OCI-LY7 (cell line): ENCODE measurements at regions of chr9 and their contacts with region 1.

Region 1: GRCh38 chr9:92140074-92140753 is 25.0 kb upstream of the SPTLC1 start:
- DNase-seq: peak; percentile 69
- H3K4me3 ChIP-seq: no peak overlapping the region
- H3K27ac ChIP-seq: no peak overlapping the region
- H3K4me1 ChIP-seq: no peaks in the 10 kb centered on the region
- CTCF ChIP-seq: peak; percentile 89

Region 2: DNA sequence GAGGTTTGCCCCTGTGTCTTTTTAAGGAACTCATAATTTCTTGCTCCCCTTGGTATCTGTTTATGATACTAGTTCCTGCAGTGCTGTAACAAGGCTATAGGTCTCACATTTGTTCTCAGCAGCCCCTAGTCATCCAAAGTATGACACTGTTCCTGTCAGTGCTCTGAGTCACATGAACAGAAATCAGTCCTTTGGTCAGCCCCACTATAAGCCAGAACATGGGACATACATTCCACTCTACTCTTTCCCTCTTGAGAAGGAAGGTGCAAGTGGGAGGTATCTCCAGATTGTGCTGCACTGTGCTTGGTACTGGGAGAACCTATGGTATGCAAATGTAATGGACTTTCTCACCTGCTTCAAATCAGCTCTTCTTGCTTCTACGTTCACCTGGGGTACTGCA is 66.3 kb after region 1 on chr9:
- CTCF ChIA-PET with region 1: interaction called, 3 read pairs
- POLR2A ChIA-PET with region 1: no interaction called
- intact Hi-C with region 1: loop called (anchors 5 kb)
- DNase-seq: no peak
- H3K4me3 ChIP-seq: no peak overlapping the region
- H3K27ac ChIP-seq: no peak overlapping the region
- H3K4me1 ChIP-seq: no peaks in the 10 kb centered on the region
- CTCF ChIP-seq: no peak

Region 3: DNA sequence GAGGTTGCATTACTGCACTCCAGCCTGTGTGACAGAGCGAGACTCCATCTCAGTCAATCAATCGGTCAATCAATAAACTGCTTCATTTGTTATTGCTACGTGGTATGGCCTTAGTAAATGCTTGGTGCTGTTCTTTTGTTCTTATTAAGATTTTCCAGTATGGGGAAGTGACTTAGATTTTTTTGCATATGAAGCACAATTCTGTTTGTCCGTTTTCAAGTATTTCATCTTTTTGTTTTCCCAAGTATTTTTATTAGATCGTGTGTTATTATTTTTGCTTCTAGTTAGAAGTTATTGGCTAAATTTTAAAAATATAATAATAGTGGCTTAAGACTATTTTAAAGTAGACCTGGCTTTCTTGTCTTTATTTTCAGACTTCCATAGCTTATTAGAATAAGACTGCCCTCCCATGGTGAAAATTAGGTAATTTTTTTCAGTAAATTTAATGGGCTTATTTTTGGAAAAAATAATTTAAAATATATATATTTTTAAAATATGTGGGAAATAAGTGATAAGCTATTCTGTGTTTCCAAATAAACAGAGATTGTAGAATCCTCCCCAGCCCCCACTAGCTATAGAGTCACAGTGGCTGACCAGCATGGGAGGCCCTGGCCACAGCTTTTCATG is 298.8 kb after region 1 on chr9:
- CTCF ChIA-PET with region 1: no interaction called
- POLR2A ChIA-PET with region 1: no interaction called
- intact Hi-C with region 1: loop called (anchors 5 kb)
- DNase-seq: peak; percentile 11
- H3K4me3 ChIP-seq: no peak overlapping the region
- H3K27ac ChIP-seq: no peak overlapping the region
- H3K4me1 ChIP-seq: no peaks in the 10 kb centered on the region
- CTCF ChIP-seq: peak; percentile 66

Region 4: DNA sequence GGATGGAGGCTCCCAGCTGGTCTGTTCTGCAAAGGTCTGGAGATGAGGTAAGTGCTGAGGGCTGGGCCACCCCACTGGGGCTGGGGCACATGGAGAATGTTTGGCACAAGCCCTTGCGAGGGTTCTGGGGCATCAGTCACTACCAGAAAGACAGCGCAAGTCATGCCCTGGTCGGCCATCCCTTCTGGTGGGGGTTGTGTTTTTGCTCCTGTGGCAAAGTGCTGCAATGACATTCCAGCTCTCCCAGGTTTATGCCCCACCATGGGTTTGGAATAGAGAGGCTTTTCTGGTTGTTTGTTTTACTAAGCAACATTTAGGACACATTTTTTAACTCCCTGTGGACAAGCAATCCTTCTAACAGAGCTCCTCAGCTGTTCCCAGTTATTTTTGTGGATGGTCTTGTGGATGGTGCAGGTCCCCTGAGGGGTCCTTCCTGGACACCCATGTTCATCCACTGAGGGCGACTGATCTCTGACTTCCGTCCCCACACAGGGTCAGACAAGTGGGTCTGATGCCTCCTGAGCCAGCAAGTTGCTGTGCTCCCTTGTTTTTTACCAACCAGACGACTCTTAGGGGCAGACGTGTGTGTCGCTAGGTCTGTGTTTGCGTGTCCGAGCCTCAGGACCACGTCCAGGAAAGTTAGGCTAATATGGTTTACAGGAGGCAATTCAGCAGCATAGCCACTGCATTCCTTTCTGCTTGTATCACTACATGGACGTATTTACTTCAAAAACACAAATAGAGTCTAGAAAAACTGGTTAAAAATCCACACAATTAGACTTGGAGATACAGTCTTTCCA is 460.4 kb after region 1 on chr9:
- CTCF ChIA-PET with region 1: no interaction called
- POLR2A ChIA-PET with region 1: no interaction called
- intact Hi-C with region 1: no loop called
- DNase-seq: no peak
- H3K4me3 ChIP-seq: no peak overlapping the region
- H3K27ac ChIP-seq: no peak overlapping the region
- H3K4me1 ChIP-seq: no peaks in the 10 kb centered on the region
- CTCF ChIP-seq: no peak

Region 5: DNA sequence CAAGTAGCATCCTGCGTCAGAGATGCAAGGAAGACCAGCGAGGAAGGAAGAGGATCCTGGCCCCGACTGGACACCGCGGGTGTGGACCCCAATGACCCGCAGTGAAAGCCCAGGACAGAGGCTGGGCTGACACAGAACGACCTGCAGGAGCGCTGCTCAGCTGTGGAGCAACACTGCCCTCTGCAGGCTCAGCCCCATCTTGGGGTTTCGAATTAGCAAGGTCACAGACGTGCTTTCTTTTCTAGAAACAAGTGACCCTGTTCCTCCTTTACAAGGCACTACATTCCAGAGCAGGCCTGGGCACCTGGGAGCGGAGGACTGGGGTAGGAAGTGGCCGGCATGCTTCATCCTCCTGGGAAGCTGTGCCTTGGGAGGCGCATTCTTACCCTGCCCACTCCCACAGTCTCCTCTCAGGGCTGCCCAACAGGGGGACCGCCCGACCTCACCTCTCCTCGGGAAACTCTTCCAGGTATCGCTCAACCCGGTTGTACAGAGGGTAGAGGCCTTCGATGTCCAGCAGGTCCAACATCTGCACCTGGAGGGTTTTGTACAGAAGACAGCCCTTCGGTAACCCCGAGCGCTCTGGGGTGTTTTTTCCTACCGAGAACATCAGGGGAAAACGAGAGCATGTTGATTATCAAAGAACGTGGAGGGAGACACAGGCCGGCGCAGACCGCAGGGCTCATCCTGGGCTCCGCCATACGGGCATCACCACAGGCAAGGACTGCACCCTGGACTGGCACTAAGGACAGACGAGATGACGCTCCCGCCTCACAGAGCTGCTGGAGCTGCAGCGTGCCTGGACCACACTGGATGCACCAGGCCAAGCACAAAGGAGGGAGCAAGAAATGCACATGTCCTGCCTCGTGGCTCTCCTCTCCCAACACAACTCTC is 494.7 kb after region 1 on chr9:
- CTCF ChIA-PET with region 1: no interaction called
- POLR2A ChIA-PET with region 1: no interaction called
- intact Hi-C with region 1: loop called (anchors 2 kb)
- DNase-seq: peak; percentile 71
- H3K4me3 ChIP-seq: no peak overlapping the region
- H3K27ac ChIP-seq: no peak overlapping the region
- H3K4me1 ChIP-seq: no peaks in the 10 kb centered on the region
- CTCF ChIP-seq: peak; percentile 97

Region 6: DNA sequence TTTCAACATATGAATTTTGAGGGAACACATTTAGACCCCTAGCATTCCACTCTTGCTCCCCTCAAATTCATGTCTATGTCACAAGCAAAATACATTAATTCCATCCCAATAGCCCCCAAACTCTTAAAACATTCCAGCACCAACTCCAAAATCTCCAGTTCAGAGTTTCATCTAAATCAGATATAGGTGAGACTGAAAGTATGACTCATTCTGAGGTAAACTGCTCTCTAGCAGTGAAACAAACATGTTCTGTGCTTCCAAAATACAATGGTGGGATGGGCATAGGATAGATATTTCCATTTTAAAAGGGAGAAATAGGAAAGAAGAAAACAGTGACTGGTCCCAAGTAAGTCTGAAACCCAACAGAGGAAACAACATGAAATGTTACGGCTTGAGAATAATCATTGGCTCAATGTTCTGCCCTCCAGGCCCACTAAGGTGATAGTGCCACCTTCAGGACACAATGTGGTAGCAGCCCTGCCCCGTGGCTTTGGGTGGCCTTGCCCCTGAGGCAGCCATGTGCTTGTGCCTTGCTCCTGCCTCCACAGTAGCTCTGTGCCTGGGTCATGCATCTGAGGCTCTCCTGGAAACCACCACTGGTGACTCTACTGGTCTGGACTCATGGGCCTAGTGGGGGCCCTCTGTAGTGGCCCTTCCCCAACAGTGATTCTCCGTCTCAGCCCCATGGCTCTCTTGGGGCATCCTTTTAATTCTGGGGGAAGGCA is 566.2 kb after region 1 on chr9:
- CTCF ChIA-PET with region 1: no interaction called
- POLR2A ChIA-PET with region 1: no interaction called
- intact Hi-C with region 1: loop called (anchors 5 kb)
- DNase-seq: peak; percentile 56
- H3K4me3 ChIP-seq: no peak overlapping the region
- H3K27ac ChIP-seq: no peak overlapping the region
- H3K4me1 ChIP-seq: no peaks in the 10 kb centered on the region
- CTCF ChIP-seq: peak; percentile 84